ENCODE measurements at regions of chr4 and their contacts with region 1.

Region 1: DNA sequence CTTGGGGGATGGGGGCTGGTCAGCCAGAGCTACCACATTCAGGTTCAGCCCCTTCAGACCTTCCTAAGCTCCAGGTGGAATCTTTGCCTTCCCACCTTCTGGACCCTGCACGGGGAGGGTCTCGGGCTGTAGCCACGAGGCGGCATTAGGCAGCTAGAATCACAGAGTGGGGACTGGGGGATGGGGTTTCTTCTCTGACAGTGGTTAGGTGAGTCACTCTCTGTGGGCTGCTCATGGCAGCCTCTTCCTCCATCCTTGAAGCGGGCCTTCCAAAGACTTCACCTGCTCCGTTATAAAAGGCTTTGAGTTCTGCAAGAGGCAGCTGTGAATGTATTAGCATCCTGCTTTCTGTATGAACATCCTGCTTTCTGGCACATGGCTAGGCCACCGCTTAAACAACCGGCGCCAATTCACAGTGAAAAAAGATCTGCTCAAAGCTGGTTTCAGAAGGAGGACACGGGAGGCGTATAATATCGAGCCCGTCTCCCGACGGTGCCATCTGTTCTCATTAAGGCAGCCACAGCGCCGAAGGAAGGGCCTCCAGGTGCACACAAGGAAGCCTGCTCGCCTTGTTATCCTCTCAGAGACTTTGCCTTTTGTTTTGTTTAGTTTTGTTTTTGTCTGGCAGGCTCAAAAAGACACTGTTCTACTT is 74.3 kb upstream of the IGFBP7 start:
- DNase-seq: no peak
- ATAC-seq: no peak
- H3K4me3 ChIP-seq: no peak overlapping the region
- H3K27ac ChIP-seq: no peak overlapping the region
- H3K4me1 ChIP-seq: peaks cover 0 to 3% (median 0%) of the 10 kb centered on the region in 9 donors
- H3K27me3 ChIP-seq: no peaks in the 10 kb centered on the region
- CTCF ChIP-seq: no peak

Region 2: DNA sequence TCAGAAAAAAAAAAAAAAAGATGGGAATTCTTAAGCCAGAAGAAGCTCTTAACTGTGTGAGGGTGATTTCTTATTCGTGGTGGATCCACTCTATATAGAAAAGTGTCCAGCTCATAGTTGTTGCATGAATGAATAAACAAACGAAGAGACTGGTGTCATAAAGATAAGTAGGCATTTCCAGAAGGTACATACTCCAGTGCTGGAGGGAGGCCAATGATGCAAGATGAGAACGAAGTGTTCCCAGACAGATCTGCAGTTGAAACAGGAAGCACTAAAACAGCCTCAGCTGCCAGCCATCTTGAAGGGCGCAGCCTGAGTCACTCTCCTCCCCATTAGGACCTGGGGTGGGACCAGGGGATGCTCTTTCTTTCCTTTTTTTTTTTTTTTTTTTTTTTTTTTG is 456.0 kb before region 1 on chr4:
- intact Hi-C with region 1: no loop called
- DNase-seq: peak; percentile 25 to 33
- ATAC-seq: peak in 6 of 8 donors; percentile 64 to 94 (median 78)
- H3K4me3 ChIP-seq: no peak overlapping the region
- H3K27ac ChIP-seq: no peak overlapping the region
- H3K4me1 ChIP-seq: peaks cover 0 to 16% (median 0%) of the 10 kb centered on the region in 9 donors
- H3K27me3 ChIP-seq: no peaks in the 10 kb centered on the region
- CTCF ChIP-seq: no peak

Region 3: DNA sequence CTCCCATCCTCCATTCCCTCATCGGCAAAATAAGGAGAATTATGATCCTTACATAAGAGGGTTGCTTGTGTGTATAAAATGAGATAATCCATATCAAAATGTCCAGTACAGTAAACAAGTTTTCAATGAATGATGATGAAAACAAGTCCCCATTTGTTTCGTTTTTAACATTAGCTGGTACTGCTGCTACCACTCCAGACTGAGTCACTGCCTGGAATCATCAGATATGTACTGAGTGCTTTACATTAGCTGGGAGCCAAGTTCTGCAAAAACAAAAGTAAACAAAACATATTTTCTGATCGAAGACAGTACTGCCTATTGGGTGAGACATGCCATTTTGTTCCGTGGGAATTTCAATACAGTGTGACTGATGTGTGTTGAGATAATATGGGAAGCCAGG is 48.9 kb after region 1 on chr4:
- intact Hi-C with region 1: loop called in 1 of 10 experiments (anchors 2 kb)
- DNase-seq: no peak
- ATAC-seq: peak in 1 of 8 donors; percentile 24
- H3K4me3 ChIP-seq: no peak overlapping the region
- H3K27ac ChIP-seq: no peak overlapping the region
- H3K4me1 ChIP-seq: no peaks in the 10 kb centered on the region
- H3K27me3 ChIP-seq: peaks cover 0 to 3% (median 0%) of the 10 kb centered on the region in 7 donors
- CTCF ChIP-seq: no peak

Region 4: GRCh38 chr4:57652779-57653178 is 468.3 kb after region 1 on chr4:
- intact Hi-C with region 1: no loop called
- DNase-seq: no peak
- ATAC-seq: no peak
- H3K4me3 ChIP-seq: no peak overlapping the region
- H3K27ac ChIP-seq: no peak overlapping the region
- H3K4me1 ChIP-seq: no peaks in the 10 kb centered on the region
- H3K27me3 ChIP-seq: no peaks in the 10 kb centered on the region
- CTCF ChIP-seq: no peak